ENCODE measurements at regions of chr12 and their contacts with region 1.

Region 1: DNA sequence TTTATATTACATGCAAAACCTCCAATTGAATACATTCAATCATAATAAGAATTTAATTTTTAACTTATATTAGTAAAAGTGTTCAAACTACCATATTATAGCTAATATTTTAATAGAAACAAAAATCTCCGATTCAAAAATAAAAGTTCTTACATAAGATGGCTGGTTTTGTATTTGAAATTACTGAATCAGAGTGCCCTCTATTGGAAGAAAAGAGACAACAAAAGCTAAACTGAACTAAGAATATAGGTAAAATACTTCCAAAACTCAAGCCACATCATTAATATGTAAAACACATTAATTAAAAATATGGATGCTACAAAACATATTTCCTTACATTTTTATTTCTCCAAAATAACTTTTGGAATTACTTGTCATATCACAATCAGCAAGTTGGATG is 120.3 kb downstream of the GARIN6 start:
- DNase-seq: no peak
- ATAC-seq: no peak

Region 2: GRCh38 chr12:99039367-99040120 is 728.3 kb before region 1 on chr12:
- intact Hi-C with region 1: loop called in 1 of 2 experiments (anchors 5 kb)
- DNase-seq: no peak
- ATAC-seq: no peak

Region 3: DNA sequence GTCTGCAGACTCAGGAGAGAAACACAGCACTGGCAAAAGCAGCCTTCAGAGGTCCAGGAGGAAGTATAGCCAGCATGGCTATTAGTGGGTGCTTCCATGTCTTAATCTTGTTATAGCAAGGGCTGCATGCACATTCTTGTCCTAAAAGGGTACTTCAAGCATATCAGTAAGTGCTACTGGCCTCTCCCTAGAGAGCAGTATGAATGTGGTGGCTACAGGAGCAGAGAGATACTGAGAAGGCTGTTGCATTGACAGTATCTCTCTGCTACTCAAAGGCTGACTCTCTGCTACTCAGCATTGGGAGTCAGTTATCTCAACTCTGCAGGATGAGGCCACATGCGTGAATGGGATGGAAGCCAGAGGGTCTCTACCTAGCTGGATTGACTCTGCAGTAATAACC is 118.3 kb before region 1 on chr12:
- intact Hi-C with region 1: no loop called
- DNase-seq: no peak
- ATAC-seq: no peak